Heart left ventricle (tissue), 16 donors: ENCODE measurements at regions of chr19 and their contacts with region 1.

Region 1: DNA sequence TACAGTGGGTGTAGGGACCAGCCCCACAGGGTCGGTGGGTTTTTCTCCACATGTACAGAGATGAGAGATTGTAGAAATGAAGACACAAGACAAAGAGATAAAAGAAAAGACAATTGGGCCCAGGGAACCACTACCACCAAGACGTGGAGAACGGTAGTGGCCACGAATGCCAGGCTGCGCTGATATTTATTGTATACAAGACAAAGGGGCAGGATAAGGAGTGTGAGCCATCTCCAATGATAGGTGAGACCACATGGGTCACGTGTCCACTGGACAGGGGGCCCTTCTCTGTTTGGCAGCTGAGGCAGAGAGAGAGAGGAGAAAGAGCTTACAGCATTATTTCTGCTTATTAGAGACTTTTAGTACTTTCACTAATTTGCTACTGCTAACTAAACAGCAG is 4.9 kb upstream of the PSG5 start:
- DNase-seq: no peak
- ATAC-seq: no peak
- H3K4me3 ChIP-seq: no peak overlapping the region
- H3K27ac ChIP-seq: no peak overlapping the region
- H3K4me1 ChIP-seq: no peaks in the 10 kb centered on the region
- H3K27me3 ChIP-seq: no peaks in the 10 kb centered on the region
- CTCF ChIP-seq: no peak
- POLR2A ChIP-seq: no peak

Region 2: DNA sequence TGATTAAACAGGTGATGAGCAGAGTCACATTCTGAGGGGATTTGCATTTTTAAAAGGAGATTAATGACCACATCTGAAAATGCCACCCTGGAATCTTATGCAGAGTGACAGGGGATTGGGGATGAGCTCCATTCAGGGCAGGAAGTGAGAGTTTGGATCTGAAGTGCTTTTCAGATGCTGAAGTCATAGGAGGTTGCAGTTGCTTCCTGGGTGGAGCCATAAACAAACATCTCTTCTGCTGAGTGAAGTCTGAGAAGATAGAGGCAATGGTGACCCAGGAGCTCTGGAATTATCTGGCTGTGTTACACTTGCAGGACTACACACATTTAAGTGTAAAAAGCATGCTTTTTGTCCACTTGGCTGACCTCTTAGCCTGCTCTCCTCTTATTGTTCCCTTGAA is 374.3 kb before region 1 on chr19:
- intact Hi-C with region 1: no loop called
- DNase-seq: no peak
- ATAC-seq: no peak
- H3K4me3 ChIP-seq: no peak overlapping the region
- H3K27ac ChIP-seq: no peak overlapping the region
- H3K4me1 ChIP-seq: no peaks in the 10 kb centered on the region
- H3K27me3 ChIP-seq: no peaks in the 10 kb centered on the region
- CTCF ChIP-seq: no peak
- POLR2A ChIP-seq: no peak

Region 3: DNA sequence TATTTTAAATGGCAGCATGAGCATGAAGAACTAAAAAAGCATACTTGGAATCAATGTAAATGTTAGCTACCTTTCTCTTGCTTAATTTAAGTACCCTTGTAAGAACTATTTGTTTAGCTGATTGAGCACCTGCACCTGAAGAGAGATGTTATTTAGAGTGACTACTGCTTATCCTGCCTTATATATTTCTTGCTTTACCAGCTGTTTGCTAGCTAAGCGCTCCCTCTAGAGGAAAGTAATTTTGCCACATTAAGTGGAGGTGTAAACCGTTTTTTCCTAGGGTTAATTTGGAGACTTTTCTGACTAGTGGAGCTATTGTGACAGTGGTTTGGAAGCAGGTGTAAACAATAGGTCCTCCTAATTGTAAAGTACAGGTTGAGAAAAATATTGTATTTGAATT is 89.2 kb before region 1 on chr19:
- intact Hi-C with region 1: loop called in 1 of 10 experiments (anchors 10 kb)
- DNase-seq: no peak
- ATAC-seq: no peak
- H3K4me3 ChIP-seq: no peak overlapping the region
- H3K27ac ChIP-seq: no peak overlapping the region
- H3K4me1 ChIP-seq: no peaks in the 10 kb centered on the region
- H3K27me3 ChIP-seq: no peaks in the 10 kb centered on the region
- CTCF ChIP-seq: no peak
- POLR2A ChIP-seq: no peak

Region 4: DNA sequence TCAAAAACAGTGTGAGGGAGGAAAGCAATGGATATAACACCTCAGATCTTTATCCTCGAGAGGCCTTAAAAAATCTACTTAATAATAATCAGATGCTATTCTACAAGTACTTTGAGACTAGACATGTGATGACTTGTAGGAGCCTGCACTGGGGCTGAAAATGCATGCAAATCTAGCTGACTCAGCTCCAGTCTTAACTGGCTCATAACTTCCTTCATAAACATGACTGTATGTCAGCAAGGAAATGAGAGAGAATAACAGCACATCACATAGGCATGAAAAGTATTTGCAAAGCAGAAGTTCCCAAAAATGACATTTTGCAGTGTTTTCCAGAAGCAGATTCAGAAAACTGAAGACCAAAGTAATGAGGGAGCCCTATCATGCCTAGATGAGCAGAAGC is 43.0 kb before region 1 on chr19:
- intact Hi-C with region 1: no loop called
- DNase-seq: no peak
- ATAC-seq: no peak
- H3K4me3 ChIP-seq: no peak overlapping the region
- H3K27ac ChIP-seq: no peak overlapping the region
- H3K4me1 ChIP-seq: no peaks in the 10 kb centered on the region
- H3K27me3 ChIP-seq: peaks cover 0 to 3% (median 0%) of the 10 kb centered on the region in 9 donors
- CTCF ChIP-seq: no peak
- POLR2A ChIP-seq: no peak

Region 5: GRCh38 chr19:43265664-43266025 is 74.5 kb after region 1 on chr19:
- intact Hi-C with region 1: loop called in 2 of 10 experiments (anchors 5 to 10 kb)
- DNase-seq: no peak
- ATAC-seq: no peak
- H3K4me3 ChIP-seq: no peak overlapping the region
- H3K27ac ChIP-seq: no peak overlapping the region
- H3K4me1 ChIP-seq: no peaks in the 10 kb centered on the region
- H3K27me3 ChIP-seq: no peaks in the 10 kb centered on the region
- CTCF ChIP-seq: no peak
- POLR2A ChIP-seq: no peak